ENCODE measurements at regions of chr10 and their contacts with region 1.

Region 1: GRCh38 chr10:97025613-97026242 is 160.0 kb downstream of the SLIT1 start:
- DNase-seq: peak; percentile 31
- ATAC-seq: peak; percentile 84
- H3K4me3 ChIP-seq: no peak overlapping the region
- H3K27ac ChIP-seq: no peak overlapping the region
- H3K4me1 ChIP-seq: peaks cover 25% of the 10 kb centered on the region
- H3K27me3 ChIP-seq: no peaks in the 10 kb centered on the region; a peak in 1 of 4 replicates
- CTCF ChIP-seq: peak; percentile 73 to 84 (median 75)
- EP300 ChIP-seq: no peak
- POLR2A ChIP-seq: no peak
- RAD21 ChIP-seq: peak; percentile 69

Region 2: DNA sequence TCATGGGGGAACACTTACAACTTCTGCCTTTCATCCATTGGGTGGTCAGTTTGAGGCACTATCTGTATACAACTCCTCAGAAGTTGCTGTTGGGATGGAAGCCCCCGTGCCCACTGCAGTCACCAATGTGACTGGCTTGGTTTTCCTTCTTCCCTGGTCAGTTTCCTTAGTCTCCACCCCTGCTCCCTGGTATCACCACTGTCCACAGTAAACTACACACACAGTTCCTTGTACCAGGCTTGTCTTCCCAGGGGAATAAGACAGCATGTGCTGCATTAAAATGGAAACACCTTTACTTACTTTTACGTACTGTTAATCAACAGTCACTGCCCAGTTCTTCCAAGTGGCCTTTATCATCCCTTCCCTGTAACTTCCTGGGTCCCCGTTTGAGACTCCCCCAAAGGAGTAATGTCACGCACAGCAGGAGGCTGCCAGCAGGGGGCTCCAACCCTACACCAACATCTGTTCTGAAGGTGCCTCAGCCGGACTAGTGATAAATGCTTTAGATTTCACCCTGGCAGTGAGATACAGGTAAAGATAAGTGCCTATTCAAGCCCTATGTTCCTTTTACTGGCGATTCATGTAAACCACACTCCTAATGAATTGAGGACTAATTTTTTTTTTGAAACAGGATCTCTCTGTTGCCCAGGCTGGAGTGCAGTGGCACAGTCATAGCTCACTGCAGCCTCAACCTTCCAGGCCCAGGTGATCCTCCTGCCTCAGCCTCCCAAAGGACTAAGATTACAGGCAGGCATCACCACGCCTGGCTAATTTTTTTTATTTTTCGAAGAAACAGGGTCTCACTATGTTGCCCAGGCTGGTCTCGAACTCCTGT is 260.1 kb before region 1 on chr10:
- CTCF ChIA-PET with region 1: interaction called, 28 read pairs
- POLR2A ChIA-PET with region 1: interaction called, 5 read pairs
- RAD21 ChIA-PET with region 1: interaction called, 11 read pairs
- SMC1A ChIA-PET with region 1: interaction called, 23 read pairs
- in situ Hi-C with region 1: no loop called
- intact Hi-C with region 1: loop called (anchors 1 kb)
- DNase-seq: no peak
- ATAC-seq: peak; percentile 94
- H3K4me3 ChIP-seq: no peak overlapping the region
- H3K27ac ChIP-seq: no peak overlapping the region
- H3K4me1 ChIP-seq: peaks cover 15% of the 10 kb centered on the region
- H3K27me3 ChIP-seq: no peaks in the 10 kb centered on the region
- CTCF ChIP-seq: peak; percentile 87 to 93 (median 89)
- EP300 ChIP-seq: no peak
- POLR2A ChIP-seq: no peak
- RAD21 ChIP-seq: peak; percentile 87

Region 3: DNA sequence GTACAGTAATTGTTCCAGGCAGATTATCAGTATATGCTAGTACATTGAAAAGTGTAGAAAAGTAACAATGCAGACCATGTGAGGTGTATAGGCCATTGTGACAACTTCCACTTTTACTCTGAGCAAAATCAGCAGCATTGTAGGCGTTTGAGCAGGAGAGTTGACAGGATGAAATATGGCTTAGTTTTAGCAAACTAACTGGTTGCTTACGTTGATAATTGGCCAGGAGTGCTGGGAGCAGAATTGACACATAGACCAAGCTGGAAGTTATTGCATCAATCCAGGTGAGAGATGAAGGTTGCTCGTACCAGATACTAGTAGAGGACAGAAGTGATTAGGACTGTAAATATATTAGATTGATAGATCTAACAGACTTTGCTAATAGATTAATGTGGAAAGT is 147.7 kb before region 1 on chr10:
- CTCF ChIA-PET with region 1: interaction called, 9 read pairs
- POLR2A ChIA-PET with region 1: no interaction called
- RAD21 ChIA-PET with region 1: interaction called, 11 read pairs
- SMC1A ChIA-PET with region 1: interaction called, 3 read pairs
- in situ Hi-C with region 1: no loop called
- intact Hi-C with region 1: no loop called
- DNase-seq: no peak
- ATAC-seq: no peak
- H3K4me3 ChIP-seq: no peak overlapping the region
- H3K27ac ChIP-seq: no peak overlapping the region
- H3K4me1 ChIP-seq: no peaks in the 10 kb centered on the region; the same call in 1 of the 2 replicates
- H3K27me3 ChIP-seq: no peaks in the 10 kb centered on the region
- CTCF ChIP-seq: no peak
- EP300 ChIP-seq: no peak
- POLR2A ChIP-seq: no peak
- RAD21 ChIP-seq: no peak

Region 4: GRCh38 chr10:96910488-96911395 is 115.0 kb before region 1 on chr10:
- CTCF ChIA-PET with region 1: interaction called, 110 read pairs
- POLR2A ChIA-PET with region 1: interaction called, 3 read pairs
- RAD21 ChIA-PET with region 1: interaction called, 43 read pairs
- SMC1A ChIA-PET with region 1: interaction called, 70 read pairs
- in situ Hi-C with region 1: no loop called
- intact Hi-C with region 1: loop called (anchors 1 kb)
- DNase-seq: peak; percentile 28
- ATAC-seq: peak; percentile 84
- H3K4me3 ChIP-seq: no peak overlapping the region
- H3K27ac ChIP-seq: peak overlapping the region; percentile 24; the same call in 1 of the 2 replicates
- H3K4me1 ChIP-seq: 0 out of 2 replicates have a peak, but pooled peaks cover 3% of the 10 kb centered on the region
- H3K27me3 ChIP-seq: no peaks in the 10 kb centered on the region
- CTCF ChIP-seq: peak; percentile 65 to 67 (median 66)
- EP300 ChIP-seq: no peak
- POLR2A ChIP-seq: no peak
- RAD21 ChIP-seq: peak; percentile 69

Region 5: GRCh38 chr10:96955794-96956193 is 69.9 kb before region 1 on chr10:
- CTCF ChIA-PET with region 1: interaction called, 27 read pairs
- POLR2A ChIA-PET with region 1: no interaction called
- RAD21 ChIA-PET with region 1: interaction called, 8 read pairs
- SMC1A ChIA-PET with region 1: interaction called, 30 read pairs
- in situ Hi-C with region 1: no loop called
- intact Hi-C with region 1: no loop called
- DNase-seq: no peak
- ATAC-seq: no peak
- H3K4me3 ChIP-seq: no peak overlapping the region
- H3K27ac ChIP-seq: no peak overlapping the region
- H3K4me1 ChIP-seq: no peaks in the 10 kb centered on the region
- H3K27me3 ChIP-seq: no peaks in the 10 kb centered on the region
- CTCF ChIP-seq: no peak
- EP300 ChIP-seq: no peak
- POLR2A ChIP-seq: no peak
- RAD21 ChIP-seq: no peak

Region 6: GRCh38 chr10:96984541-96985131 is 41.1 kb before region 1 on chr10:
- CTCF ChIA-PET with region 1: interaction called, 85 read pairs
- POLR2A ChIA-PET with region 1: no interaction called
- RAD21 ChIA-PET with region 1: interaction called, 30 read pairs
- SMC1A ChIA-PET with region 1: interaction called, 96 read pairs
- in situ Hi-C with region 1: no loop called
- intact Hi-C with region 1: no loop called
- DNase-seq: no peak
- ATAC-seq: peak; percentile 86
- H3K4me3 ChIP-seq: peak overlapping the region; percentile 38; the same call in 1 of the 2 replicates
- H3K27ac ChIP-seq: peak overlapping the region; percentile 30; the same call in 1 of the 2 replicates
- H3K4me1 ChIP-seq: peaks cover 7% of the 10 kb centered on the region; the same call in 1 of the 2 replicates
- H3K27me3 ChIP-seq: no peaks in the 10 kb centered on the region
- CTCF ChIP-seq: no peak
- EP300 ChIP-seq: no peak
- POLR2A ChIP-seq: no peak
- RAD21 ChIP-seq: no peak

Region 7: DNA sequence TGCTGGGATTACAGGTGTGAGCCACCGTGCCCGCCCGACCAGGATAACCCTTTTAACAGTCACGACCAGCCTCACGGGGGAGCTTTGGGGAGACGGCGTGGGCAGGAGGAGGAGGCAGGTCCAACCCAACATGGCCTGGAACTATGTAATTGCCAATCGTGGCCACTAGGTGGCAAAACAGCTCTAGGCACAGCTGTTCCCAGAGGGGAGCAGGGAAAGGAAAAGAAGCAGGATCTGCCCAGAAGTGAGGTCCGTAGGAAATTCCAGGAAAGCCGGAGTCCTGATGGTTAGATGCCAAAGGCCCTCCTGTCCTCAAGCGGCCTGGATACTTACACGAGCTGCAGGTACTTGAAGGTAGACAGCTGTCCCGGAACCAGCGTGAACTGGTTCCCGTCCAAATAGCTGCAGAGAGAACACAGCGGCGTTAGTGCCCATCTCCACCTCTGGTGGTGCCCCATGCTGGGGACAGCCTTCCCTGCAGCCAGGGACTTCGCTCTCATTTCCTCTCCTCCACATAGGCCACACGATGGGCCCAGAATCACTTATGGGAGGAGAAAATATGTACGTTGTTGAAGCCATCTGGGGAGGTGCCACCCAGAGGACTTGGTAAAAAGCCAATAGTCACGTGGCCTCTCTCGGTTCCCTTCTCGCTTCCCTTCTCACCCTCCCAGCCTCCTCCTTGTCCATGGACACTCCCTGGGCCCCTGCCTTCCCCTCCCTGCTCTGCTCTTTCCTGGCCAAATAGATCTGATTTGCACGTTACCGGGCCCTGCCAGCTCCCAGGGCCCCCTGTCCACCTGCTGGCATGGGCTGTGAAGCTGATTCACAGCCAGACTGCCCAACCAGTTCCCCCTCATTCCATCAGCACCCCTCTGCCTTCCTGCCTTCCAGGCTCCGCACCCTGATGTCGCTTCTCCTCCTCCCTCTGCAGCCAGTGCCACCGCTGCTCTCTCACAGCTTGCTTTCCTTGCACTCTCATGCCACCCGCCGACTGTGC is 11.9 kb after region 1 on chr10:
- CTCF ChIA-PET with region 1: interaction called, 155 read pairs
- POLR2A ChIA-PET with region 1: interaction called, 3 read pairs
- RAD21 ChIA-PET with region 1: interaction called, 7 read pairs
- SMC1A ChIA-PET with region 1: interaction called, 24 read pairs
- in situ Hi-C with region 1: no loop called
- intact Hi-C with region 1: no loop called
- DNase-seq: peak; percentile 34
- ATAC-seq: peak; percentile 96
- H3K4me3 ChIP-seq: peak overlapping the region; percentile 35; the same call in 1 of the 2 replicates
- H3K27ac ChIP-seq: no peak overlapping the region
- H3K4me1 ChIP-seq: peaks cover 7% of the 10 kb centered on the region
- H3K27me3 ChIP-seq: peaks cover 0 to 3% of the 10 kb centered on the region in 2 experiments; a peak in 2 of 4 replicates
- CTCF ChIP-seq: peak; percentile 78 to 95 (median 87)
- EP300 ChIP-seq: no peak
- POLR2A ChIP-seq: no peak
- RAD21 ChIP-seq: peak; percentile 71

Measured in GM12878 (cell line).